ENCODE measurements at regions of chr1 and their contacts with region 1.

Region 1: GRCh38 chr1:163346346-163346870 is 24.7 kb downstream of the NUF2 start:
- DNase-seq: no peak
- H3K4me3 Mint-ChIP-seq: no peak overlapping the region
- H3K27ac Mint-ChIP-seq: no peak overlapping the region
- H3K4me1 Mint-ChIP-seq: peaks cover 2% of the 10 kb centered on the region
- H3K27me3 Mint-ChIP-seq: no peaks in the 10 kb centered on the region

Region 2: GRCh38 chr1:163321311-163322305 is 24.8 kb before region 1 on chr1 and contains the start of gene NUF2:
- CTCF ChIA-PET with region 1: no interaction called
- POLR2A ChIA-PET with region 1: interaction called, 11 read pairs
- DNase-seq: peak; percentile 98
- H3K4me3 Mint-ChIP-seq: peak within 1 kb of the TSS; percentile 89
- H3K27ac Mint-ChIP-seq: peak within 1 kb of the TSS; percentile 93
- H3K4me1 Mint-ChIP-seq: peaks cover 44% of the 10 kb centered on the region
- H3K27me3 Mint-ChIP-seq: no peaks in the 10 kb centered on the region
- total RNA-seq, gene NUF2: 69.1 to 69.9 TPM

Measured in activated CD4-positive, alpha-beta memory T cell treated with anti-CD3 and anti-CD28 coated beads, Interleukin-2, amount 10 ng/mL, durations not matched to agents 7 days and 5 days (primary cell).